Common myeloid progenitor, CD34-positive (primary cell): ENCODE measurements at regions of chr20 and their contacts with region 1.

Region 1: DNA sequence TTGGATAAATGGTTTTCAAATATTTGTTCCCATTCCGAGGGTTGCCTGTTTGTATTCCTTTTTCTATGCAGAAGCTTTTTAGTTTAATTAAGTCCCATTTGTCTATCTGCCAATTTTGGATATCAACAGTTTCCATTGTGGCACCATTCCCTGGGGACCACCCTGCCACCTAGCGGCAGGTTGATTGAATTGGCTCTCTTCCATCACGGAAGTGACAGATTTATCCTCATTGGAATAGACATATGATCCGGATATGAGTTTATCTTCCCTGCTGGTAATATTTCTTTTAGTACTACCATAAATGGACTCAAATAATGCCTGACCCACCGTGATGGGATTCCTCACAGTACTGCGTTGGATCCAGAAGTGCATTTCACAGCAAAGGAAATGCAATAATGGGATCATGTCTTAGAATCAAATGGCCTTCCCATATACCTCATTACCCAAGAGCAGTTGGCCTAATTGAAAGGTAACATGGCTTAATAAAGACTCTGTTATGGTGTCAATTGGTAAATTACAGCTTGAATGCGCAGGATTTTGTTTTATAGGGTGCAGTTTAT is 327.0 kb downstream of the BMP2 start:
- DNase-seq: peak; percentile 42 to 66 (median 59)
- H3K4me3 ChIP-seq: no peak overlapping the region
- H3K27ac ChIP-seq: no peak overlapping the region
- H3K4me1 ChIP-seq: no peaks in the 10 kb centered on the region
- H3K27me3 ChIP-seq: no peaks in the 10 kb centered on the region

Region 2: GRCh38 chr20:6765469-6766058 is 329.0 kb before region 1 on chr20:
- CTCF ChIA-PET with region 1: interaction called, 10 read pairs
- POLR2A ChIA-PET with region 1: no interaction called
- DNase-seq: peak; percentile 73 to 79 (median 75)
- H3K4me3 ChIP-seq: no peak overlapping the region
- H3K27ac ChIP-seq: no peak overlapping the region
- H3K4me1 ChIP-seq: peaks cover 0 to 32% (median 18%) of the 10 kb centered on the region in 4 experiments
- H3K27me3 ChIP-seq: peaks cover 5 to 40% (median 31%) of the 10 kb centered on the region in 5 experiments

Region 3: DNA sequence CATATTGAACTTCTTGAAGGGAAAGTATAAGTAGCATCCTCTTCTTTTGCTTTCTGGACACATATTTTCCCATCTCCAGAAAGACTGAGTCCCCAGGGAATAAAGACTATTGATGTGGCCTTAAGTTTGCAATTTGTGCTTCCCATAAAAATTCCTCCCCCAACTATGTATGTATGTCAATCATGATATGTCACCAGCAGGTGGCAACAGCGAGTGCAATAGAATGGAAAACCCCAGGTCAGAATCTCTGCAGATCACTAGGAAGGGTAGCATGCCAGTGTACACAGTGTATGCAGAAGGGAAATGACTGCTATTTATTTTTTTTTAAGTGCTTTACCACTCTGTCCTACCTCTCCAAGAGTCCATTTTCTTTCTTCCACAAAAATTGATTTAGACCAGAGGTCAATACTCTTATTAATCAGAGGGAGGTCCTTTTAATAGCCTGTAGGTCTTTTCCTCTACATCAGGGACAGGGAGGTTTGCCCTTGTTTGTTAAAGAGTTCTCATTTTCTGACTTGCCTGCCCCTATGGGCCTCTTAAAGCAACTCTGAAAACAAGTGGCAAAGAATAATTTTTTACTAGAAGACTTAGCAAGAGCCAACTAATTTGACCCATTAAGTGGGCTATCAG is 265.6 kb before region 1 on chr20:
- CTCF ChIA-PET with region 1: interaction called, 12 read pairs
- POLR2A ChIA-PET with region 1: no interaction called
- DNase-seq: peak; percentile 63 to 80 (median 72)
- H3K4me3 ChIP-seq: no peak overlapping the region
- H3K27ac ChIP-seq: no peak overlapping the region
- H3K4me1 ChIP-seq: no peaks in the 10 kb centered on the region
- H3K27me3 ChIP-seq: peaks cover 0 to 2% (median 0%) of the 10 kb centered on the region in 5 experiments